ENCODE measurements at regions of chr15 and their contacts with region 1.

Region 1: GRCh38 chr15:71455107-71455506 is 339.8 kb downstream of the THSD4 start:
- DNase-seq: no peak
- ATAC-seq: no peak

Region 2: DNA sequence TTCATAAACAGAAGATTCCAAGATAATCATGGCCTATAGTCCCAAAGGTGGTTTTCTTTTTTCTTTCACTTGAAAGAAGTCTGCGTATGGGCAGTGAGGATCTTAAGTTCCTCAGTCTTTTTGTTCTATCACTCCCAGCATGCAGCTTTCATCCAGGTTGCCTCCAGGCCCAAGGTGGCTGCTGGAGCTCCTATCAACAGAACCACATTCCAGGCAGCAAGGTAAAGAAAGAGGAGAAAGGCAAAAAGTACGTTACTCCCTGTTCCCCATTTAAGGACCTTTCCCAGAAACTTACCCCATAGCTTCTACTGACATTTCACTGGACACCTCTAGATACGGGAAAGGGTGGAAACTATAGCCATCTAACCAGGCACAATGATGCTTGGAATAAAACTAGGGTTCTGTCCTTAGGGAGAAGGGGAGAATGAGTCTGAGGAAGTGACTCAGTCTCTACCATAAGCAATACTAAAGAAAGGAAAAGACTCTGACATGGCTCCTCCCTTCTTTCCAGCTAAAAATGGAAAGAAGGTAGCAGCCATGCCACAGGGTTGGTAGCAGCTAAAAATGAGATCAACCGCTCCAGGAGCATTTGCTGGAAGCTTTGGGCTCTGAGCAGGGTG is 41.3 kb after region 1 on chr15:
- intact Hi-C with region 1: loop called (anchors 5 kb)
- DNase-seq: no peak
- ATAC-seq: no peak

Region 3: DNA sequence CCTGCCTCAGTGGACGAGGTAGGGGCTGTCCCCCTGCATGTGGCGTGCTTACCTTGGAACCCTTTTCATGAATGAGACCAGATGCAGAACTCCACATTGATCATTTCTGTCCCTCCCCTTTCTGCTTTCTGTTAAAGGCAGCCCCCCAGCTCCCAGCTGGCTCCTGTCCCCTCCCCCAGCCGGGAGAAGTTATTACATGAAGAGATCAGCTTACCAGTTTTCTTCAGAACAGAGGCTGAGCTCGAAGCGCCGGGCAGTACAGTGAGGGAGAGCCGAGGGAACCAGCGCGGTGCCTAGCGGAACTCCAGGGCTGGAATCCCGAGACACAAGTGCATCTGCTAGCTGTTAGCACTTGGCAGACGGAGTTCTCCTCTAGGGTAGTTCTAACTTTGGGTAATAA is 91.9 kb after region 1 on chr15:
- intact Hi-C with region 1: loop called (anchors 10 kb)
- DNase-seq: peak; percentile 66
- ATAC-seq: peak; percentile 74

Region 4: GRCh38 chr15:71651750-71652186 is 196.7 kb after region 1 on chr15:
- intact Hi-C with region 1: loop called (anchors 10 kb)
- DNase-seq: no peak
- ATAC-seq: peak; percentile 55